Mammary epithelial cell (primary cell): ENCODE measurements at regions of chr19 and their contacts with region 1.

Region 1: DNA sequence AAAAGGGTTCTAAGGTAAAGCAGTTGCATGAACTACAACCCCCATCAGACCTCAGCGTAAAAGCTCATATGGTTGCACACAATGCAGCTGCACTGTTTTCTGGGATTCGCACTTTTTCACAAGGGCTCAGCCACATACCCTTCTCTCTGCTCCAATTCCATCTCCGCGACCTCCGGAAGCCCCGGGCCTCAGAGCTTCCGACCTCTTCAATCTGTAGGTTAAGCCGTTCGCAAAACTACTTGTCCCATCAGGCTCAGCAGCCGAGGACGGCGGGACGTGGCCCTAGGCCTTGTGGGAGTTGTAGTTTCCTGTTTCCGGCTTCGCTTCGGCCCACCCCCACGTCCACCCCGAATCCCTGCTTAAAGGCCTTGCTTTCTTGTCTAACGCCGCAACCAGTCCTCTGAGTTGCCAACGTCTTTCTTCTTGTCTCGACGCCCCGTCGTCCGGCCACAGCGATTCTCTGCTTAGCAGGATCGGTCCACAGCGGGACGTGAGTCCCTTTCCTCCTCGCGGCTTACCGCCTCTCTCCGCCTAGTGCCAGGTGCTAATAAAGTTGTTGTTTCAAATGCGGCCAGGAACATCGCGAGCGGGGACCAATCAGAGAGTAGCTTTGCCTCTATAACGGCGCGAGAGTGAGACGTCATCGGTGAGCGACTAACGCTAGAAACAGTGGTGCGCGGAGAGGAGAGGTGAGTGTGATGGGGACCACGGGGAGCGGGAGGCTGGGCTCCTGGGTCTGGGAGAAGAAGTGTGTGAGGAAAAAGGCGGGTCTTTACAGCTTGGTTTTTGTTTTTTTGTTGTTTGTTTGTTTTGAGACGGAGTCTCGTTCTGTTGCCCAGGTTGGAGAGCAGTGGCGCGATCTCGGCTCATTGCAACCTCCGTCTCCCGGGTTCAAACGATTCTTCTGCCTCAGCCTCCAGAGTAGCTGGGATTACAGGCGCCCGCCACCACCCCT is at the starts of genes PRPF31 and TFPT:
- DNase-seq: peak; percentile 98
- H3K4me3 ChIP-seq: peak within 1 kb of the TSS; percentile 75 to 92 (median 87)
- H3K27ac ChIP-seq: peak within 1 kb of the TSS; percentile 80
- H3K4me1 ChIP-seq: peaks cover 8% of the 10 kb centered on the region
- H3K27me3 ChIP-seq: no peaks in the 10 kb centered on the region
- CTCF ChIP-seq: no peak
- total RNA-seq, gene PRPF31: 34.2 to 56.4 TPM
- total RNA-seq, gene TFPT: 9.3 to 23.2 TPM

Region 2: DNA sequence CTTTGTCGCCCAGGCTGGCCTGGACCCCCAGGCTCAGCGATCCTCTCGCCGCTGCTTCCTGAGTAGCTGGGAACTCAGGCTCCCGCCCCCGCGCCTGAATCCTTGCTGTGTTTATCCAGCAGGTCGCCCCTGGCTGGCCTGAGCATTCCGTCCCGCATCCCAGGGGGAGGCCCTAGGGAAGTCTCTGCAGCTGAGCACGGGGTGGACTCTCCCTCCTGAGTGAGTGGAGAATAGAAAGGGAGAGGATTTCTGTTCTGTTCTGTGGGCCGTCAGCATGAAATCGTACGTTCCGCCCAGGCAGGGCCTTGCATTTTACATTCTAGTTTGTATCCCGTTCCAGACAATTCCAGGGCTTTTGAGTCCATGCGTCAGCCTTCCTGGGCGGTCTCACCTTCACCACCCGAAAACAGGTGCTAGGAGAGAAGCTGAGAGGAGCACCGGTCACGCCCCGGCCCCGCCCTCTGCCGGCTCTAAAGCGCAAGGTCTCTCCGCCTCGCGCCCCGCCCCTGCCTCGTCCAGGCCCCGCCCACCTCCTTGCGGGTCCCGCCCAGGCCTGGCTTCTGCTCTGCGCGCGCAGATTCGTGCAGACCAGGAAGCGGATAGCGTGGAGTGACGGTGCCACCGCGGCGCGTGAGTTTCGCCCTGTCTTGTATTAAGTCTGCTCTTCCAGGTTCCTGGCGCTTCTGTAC is 683.8 kb before region 1 on chr19 and contains the start of gene ZNF761:
- CTCF ChIA-PET with region 1: no interaction called
- dilution Hi-C with region 1: no loop called
- in situ Hi-C with region 1: no loop called
- intact Hi-C with region 1: loop called (anchors 10 kb)
- DNase-seq: peak; percentile 97
- H3K4me3 ChIP-seq: peak within 1 kb of the TSS; percentile 77 to 96 (median 91)
- H3K27ac ChIP-seq: peak within 1 kb of the TSS; percentile 94
- H3K4me1 ChIP-seq: peaks cover 7% of the 10 kb centered on the region
- H3K27me3 ChIP-seq: no peaks in the 10 kb centered on the region
- CTCF ChIP-seq: peak in 1 of 2 donors; percentile 33
- total RNA-seq, gene ZNF761: 10.3 to 11.0 TPM

Region 3: GRCh38 chr19:54102421-54103169 is 12.8 kb before region 1 on chr19 and contains the start of gene NDUFA3:
- CTCF ChIA-PET with region 1: interaction called, 5 read pairs
- dilution Hi-C with region 1: no loop called
- in situ Hi-C with region 1: no loop called
- intact Hi-C with region 1: loop called (anchors 1 kb)
- DNase-seq: peak; percentile 97
- H3K4me3 ChIP-seq: peak within 1 kb of the TSS; percentile 95 to 99 (median 98)
- H3K27ac ChIP-seq: peak within 1 kb of the TSS; percentile 0
- H3K4me1 ChIP-seq: peaks cover 3% of the 10 kb centered on the region
- H3K27me3 ChIP-seq: no peaks in the 10 kb centered on the region
- CTCF ChIP-seq: no peak
- total RNA-seq, gene NDUFA3: 12.8 to 86.7 TPM

Region 4: GRCh38 chr19:54137086-54137921 is 21.9 kb after region 1 on chr19 and contains the start of gene CNOT3:
- CTCF ChIA-PET with region 1: interaction called, 5 read pairs
- dilution Hi-C with region 1: no loop called
- in situ Hi-C with region 1: no loop called
- intact Hi-C with region 1: loop called (anchors 1 kb)
- DNase-seq: peak; percentile 100
- H3K4me3 ChIP-seq: peak within 1 kb of the TSS; percentile 67 to 86 (median 69)
- H3K27ac ChIP-seq: peak within 1 kb of the TSS; percentile 59
- H3K4me1 ChIP-seq: peaks cover 18% of the 10 kb centered on the region
- H3K27me3 ChIP-seq: no peaks in the 10 kb centered on the region
- CTCF ChIP-seq: no peak
- total RNA-seq, gene CNOT3: 4.3 to 54.1 TPM

Region 5: DNA sequence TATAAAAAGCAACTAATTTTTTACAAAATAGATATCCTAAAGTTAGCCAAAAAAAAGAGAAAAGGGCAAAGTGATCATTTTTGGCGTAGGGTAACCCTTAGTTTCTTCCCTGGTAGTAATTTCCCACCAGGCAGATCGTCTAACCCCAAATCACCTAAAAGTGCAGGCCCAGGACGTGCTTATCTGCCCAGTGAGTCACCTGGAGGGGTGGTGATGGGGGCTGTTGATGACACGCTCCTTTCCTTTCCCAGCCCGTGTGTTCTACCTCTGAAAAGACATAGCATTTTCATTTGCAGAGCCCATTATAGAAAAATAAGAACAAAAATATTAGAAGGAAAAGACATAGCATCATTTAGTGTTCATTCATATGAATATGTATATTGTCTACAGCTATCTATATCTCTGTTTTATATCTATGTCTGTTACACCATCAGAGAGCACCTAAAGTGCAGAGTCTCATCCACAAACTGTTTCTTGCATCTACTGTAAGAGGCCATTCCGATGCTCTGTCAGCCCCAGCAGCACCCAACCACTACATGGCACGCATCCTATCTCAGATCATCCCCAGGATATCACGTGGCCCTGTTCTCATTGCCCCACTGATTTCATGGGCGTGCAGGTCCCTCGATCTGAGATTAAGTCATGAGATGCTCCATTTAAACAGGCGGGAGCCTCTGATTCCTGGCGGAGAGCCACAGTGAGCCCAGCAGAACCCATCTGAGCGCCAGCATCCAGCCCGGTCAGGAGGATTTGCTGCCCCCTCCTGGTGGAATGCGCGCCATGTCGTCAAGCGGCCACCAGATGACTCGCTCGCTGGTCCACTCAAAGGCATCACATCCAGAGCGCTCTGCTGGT is 115.9 kb after region 1 on chr19:
- CTCF ChIA-PET with region 1: no interaction called
- dilution Hi-C with region 1: no loop called
- in situ Hi-C with region 1: no loop called
- intact Hi-C with region 1: loop called (anchors 1 kb)
- DNase-seq: peak; percentile 62
- H3K4me3 ChIP-seq: no peak overlapping the region
- H3K27ac ChIP-seq: no peak overlapping the region
- H3K4me1 ChIP-seq: no peaks in the 10 kb centered on the region
- H3K27me3 ChIP-seq: no peaks in the 10 kb centered on the region
- CTCF ChIP-seq: peak; percentile 85 to 94

Region 6: GRCh38 chr19:54257116-54257480 is 141.7 kb after region 1 on chr19 and contains the start of gene LILRB5:
- CTCF ChIA-PET with region 1: no interaction called
- dilution Hi-C with region 1: no loop called
- in situ Hi-C with region 1: no loop called
- intact Hi-C with region 1: no loop called
- DNase-seq: no peak
- H3K4me3 ChIP-seq: no peak within 1 kb of the TSS
- H3K27ac ChIP-seq: no peak within 1 kb of the TSS
- H3K4me1 ChIP-seq: no peaks in the 10 kb centered on the region
- H3K27me3 ChIP-seq: peaks cover 2% of the 10 kb centered on the region
- CTCF ChIP-seq: no peak
- total RNA-seq, gene LILRB5: not detected